Activated CD8-positive, alpha-beta T cell treated with anti-CD3 and anti-CD28 coated beads for 36 hours (primary cell): ENCODE measurements at regions of chr5 and their contacts with region 1.

Region 1: GRCh38 chr5:146188358-146188757 is 5.9 kb upstream of the LARS1 start:
- DNase-seq: no peak
- ATAC-seq: no peak
- H3K4me3 Mint-ChIP-seq: no peak overlapping the region
- H3K27ac Mint-ChIP-seq: no peak overlapping the region
- H3K4me1 Mint-ChIP-seq: peaks cover 12% of the 10 kb centered on the region
- H3K27me3 Mint-ChIP-seq: peaks cover 5% of the 10 kb centered on the region
- CTCF ChIP-seq: no peak

Region 2: GRCh38 chr5:146111409-146111808 is 76.9 kb before region 1 on chr5:
- CTCF ChIA-PET with region 1: no interaction called
- POLR2A ChIA-PET with region 1: no interaction called
- intact Hi-C with region 1: no loop called
- DNase-seq: no peak
- ATAC-seq: no peak
- H3K4me3 Mint-ChIP-seq: no peak overlapping the region
- H3K27ac Mint-ChIP-seq: no peak overlapping the region
- H3K4me1 Mint-ChIP-seq: peaks cover 3% of the 10 kb centered on the region
- H3K27me3 Mint-ChIP-seq: no peaks in the 10 kb centered on the region
- CTCF ChIP-seq: no peak

Region 3: DNA sequence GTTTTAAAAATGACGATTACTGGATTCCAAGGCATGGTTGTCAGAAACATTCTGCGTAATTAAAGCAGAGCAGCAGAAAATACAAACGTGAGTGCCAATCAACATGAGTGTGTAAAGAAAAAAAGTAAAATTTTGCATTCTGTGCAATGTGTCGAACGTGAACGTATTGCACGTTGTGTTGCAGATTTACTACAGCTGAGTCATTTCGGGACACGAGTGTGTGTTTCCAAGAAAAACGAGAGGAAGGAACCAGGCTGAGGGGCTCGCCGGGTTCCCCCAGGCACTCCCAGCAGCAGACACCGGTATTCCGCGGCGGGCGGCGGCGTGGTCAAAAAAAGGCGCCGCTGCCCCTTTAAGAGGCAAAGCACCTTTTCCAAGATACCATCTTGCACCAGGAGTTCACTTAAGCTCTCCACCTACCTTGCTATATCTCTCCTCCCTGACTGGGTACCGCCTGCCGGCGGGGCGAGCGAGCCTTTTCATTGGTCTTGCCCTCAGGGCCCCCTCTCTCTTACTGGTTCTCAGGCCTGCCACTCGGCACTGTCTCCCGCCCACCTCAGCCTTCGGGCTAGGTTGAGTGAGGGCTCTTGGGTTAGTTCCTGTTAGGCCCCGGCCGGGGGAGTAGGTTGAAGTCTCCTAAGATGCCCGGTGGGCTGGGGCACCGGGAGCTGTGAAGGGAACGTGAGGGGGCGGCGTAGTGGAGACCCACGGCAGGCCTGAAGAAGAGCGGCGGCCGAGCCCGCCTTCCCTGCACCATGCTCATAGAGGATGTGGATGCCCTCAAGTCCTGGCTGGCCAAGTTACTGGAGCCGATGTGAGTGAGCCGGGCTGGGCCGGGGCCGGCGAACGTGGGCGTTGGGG is 14.9 kb after region 1 on chr5 and contains the start of gene RBM27:
- CTCF ChIA-PET with region 1: interaction called, 8 read pairs
- POLR2A ChIA-PET with region 1: interaction called, 10 read pairs
- intact Hi-C with region 1: no loop called
- DNase-seq: peak; percentile 97
- ATAC-seq: peak; percentile 99
- H3K4me3 Mint-ChIP-seq: no peak within 1 kb of the TSS
- H3K27ac Mint-ChIP-seq: no peak within 1 kb of the TSS
- H3K4me1 Mint-ChIP-seq: peaks cover 14% of the 10 kb centered on the region
- H3K27me3 Mint-ChIP-seq: no peaks in the 10 kb centered on the region
- CTCF ChIP-seq: no peak
- total RNA-seq, gene RBM27: 29.1 to 29.3 TPM

Region 4: DNA sequence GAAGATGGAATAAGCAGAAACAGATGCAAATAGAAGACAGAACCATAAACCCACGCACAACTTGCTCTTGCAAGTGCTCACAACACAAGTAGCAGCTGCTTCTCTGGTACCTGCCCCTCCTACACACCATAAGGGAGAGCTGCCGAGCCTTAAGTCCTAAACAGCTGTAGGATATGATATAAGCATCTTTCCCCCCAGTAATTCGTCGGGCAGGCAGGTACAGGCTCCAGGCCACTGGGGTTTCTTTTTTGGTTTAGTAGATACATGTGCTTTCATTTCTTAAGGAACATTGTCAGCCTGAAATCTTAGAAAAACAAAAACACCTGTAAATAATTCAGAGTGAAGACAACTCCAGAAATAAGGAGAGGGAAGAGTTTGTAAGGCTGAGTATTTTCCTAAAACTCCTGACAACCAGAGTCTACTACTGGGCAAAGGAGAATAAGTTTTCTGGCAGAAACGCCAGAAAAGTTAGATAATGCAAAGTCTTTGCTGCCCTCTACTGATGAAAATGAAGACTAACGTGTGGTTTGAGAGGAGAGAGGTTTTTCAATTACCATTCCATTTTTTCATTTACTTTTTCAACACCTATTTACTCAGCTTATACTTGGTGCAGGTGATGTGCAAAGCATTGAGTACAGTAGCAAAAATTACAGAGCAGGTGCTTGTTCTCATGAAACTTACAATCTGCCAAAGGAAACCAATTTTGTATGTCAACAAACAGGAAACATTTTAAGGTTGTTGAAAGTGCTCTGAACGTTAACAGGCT is 238.7 kb after region 1 on chr5:
- CTCF ChIA-PET with region 1: no interaction called
- POLR2A ChIA-PET with region 1: no interaction called
- intact Hi-C with region 1: no loop called
- DNase-seq: no peak
- ATAC-seq: peak; percentile 67
- H3K4me3 Mint-ChIP-seq: no peak overlapping the region
- H3K27ac Mint-ChIP-seq: no peak overlapping the region
- H3K4me1 Mint-ChIP-seq: peaks cover 4% of the 10 kb centered on the region
- H3K27me3 Mint-ChIP-seq: peaks cover 17% of the 10 kb centered on the region
- CTCF ChIP-seq: peak; percentile 67

Region 5: GRCh38 chr5:146446853-146447733 is 258.7 kb after region 1 on chr5 and contains the start of gene TCERG1:
- CTCF ChIA-PET with region 1: no interaction called
- POLR2A ChIA-PET with region 1: no interaction called
- intact Hi-C with region 1: loop called (anchors 2 kb)
- DNase-seq: peak; percentile 99
- ATAC-seq: peak; percentile 92
- H3K4me3 Mint-ChIP-seq: peak within 1 kb of the TSS; percentile 97
- H3K27ac Mint-ChIP-seq: peak within 1 kb of the TSS; percentile 99
- H3K4me1 Mint-ChIP-seq: peaks cover 39% of the 10 kb centered on the region
- H3K27me3 Mint-ChIP-seq: no peaks in the 10 kb centered on the region
- CTCF ChIP-seq: peak; percentile 41
- total RNA-seq, gene TCERG1: 116 to 120 TPM